ENCODE measurements at regions of chr17 and their contacts with region 1.

Region 1: DNA sequence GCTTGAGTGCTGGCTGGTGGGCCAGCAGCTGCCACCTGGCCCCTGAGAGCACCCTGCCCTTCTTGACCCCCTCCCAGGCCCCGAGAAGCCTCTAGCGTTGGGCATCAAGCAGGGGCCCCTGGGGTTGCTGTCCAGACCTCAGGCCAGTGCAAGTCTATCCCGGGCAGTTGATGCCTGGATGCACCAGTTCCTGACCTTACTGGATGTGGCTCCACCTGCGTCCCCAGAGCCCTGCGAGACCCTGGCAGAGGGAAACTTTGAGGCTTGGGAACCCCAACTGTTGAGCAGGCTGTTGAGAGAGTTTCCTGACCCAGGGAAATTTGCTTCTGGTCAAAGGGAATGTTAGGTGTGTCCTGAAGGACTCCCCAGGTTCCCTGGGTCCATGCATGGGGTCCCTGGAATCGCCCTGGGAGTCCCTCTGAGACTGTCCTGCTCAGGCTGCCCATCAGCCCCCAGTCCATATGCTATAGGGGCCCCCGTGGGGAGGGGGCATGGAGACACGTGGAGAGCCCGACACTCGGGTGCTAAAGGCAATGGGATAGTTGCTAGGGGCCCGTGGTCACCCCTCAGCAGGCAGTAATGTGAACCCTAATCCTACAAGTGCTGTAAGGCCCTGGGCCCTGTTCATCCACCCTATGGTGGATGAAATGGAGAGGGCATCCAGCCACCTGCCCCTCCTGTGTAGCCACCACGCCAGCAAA is 46.4 kb downstream of the RAB11FIP4 start:
- DNase-seq: no peak
- ATAC-seq: 0 out of 2 replicates have a peak, but pooled peaks have one; percentile 7
- H3K4me3 ChIP-seq: no peak overlapping the region
- H3K27ac ChIP-seq: no peak overlapping the region
- H3K4me1 ChIP-seq: no peaks in the 10 kb centered on the region
- H3K27me3 ChIP-seq: peaks cover 32% of the 10 kb centered on the region
- CTCF ChIP-seq: no peak
- POLR2A ChIP-seq: no peak
- RAD21 ChIP-seq: no peak

Region 2: GRCh38 chr17:31524926-31525800 is 87.3 kb after region 1 on chr17:
- CTCF ChIA-PET with region 1: interaction called, 4 read pairs
- POLR2A ChIA-PET with region 1: no interaction called
- dilution Hi-C with region 1: no loop called
- in situ Hi-C with region 1: loop called (anchors 5 kb)
- intact Hi-C with region 1: loop called (anchors 1 kb)
- DNase-seq: peak; percentile 93
- ATAC-seq: peak; percentile 94
- H3K4me3 ChIP-seq: no peak overlapping the region
- H3K27ac ChIP-seq: no peak overlapping the region
- H3K4me1 ChIP-seq: peaks cover 1% of the 10 kb centered on the region; the same call in 1 of the 2 replicates
- H3K27me3 ChIP-seq: peaks cover 2% of the 10 kb centered on the region; the same call in 1 of the 2 replicates
- CTCF ChIP-seq: peak; percentile 96
- POLR2A ChIP-seq: no peak
- RAD21 ChIP-seq: peak; percentile 97

Region 3: GRCh38 chr17:31858642-31859473 is 421.0 kb after region 1 on chr17 and contains the start of gene COPRS:
- CTCF ChIA-PET with region 1: no interaction called
- POLR2A ChIA-PET with region 1: no interaction called
- dilution Hi-C with region 1: no loop called
- in situ Hi-C with region 1: no loop called
- intact Hi-C with region 1: loop called (anchors 5 kb)
- DNase-seq: peak; percentile 81
- ATAC-seq: peak; percentile 92
- H3K4me3 ChIP-seq: peak within 1 kb of the TSS; percentile 97
- H3K27ac ChIP-seq: peak within 1 kb of the TSS; percentile 67
- H3K4me1 ChIP-seq: peaks cover 4% of the 10 kb centered on the region
- H3K27me3 ChIP-seq: no peaks in the 10 kb centered on the region
- CTCF ChIP-seq: peak; percentile 23; the same call in 1 of the 2 replicates
- POLR2A ChIP-seq: peak; percentile 61; the same call in 1 of the 2 replicates
- RAD21 ChIP-seq: peak; percentile 18; the same call in 1 of the 2 replicates
- total RNA-seq, gene COPRS: 123 and 141 TPM in 2 replicates

Measured in IMR-90 (cell line).